Heart left ventricle (tissue), 16 donors: ENCODE measurements at regions of chr5 and their contacts with region 1.

Region 1: GRCh38 chr5:94161801-94162200 is 420.4 kb upstream of the POU5F2 start:
- DNase-seq: no peak
- ATAC-seq: no peak
- H3K4me3 ChIP-seq: no peak overlapping the region
- H3K27ac ChIP-seq: no peak overlapping the region
- H3K4me1 ChIP-seq: no peaks in the 10 kb centered on the region
- H3K27me3 ChIP-seq: no peaks in the 10 kb centered on the region
- CTCF ChIP-seq: no peak
- POLR2A ChIP-seq: no peak

Region 2: GRCh38 chr5:94345257-94345656 is 183.5 kb after region 1 on chr5:
- intact Hi-C with region 1: no loop called
- DNase-seq: no peak
- ATAC-seq: no peak
- H3K4me3 ChIP-seq: no peak overlapping the region
- H3K27ac ChIP-seq: no peak overlapping the region
- H3K4me1 ChIP-seq: no peaks in the 10 kb centered on the region
- H3K27me3 ChIP-seq: no peaks in the 10 kb centered on the region
- CTCF ChIP-seq: no peak
- POLR2A ChIP-seq: no peak

Region 3: GRCh38 chr5:94508461-94509148 is 346.8 kb after region 1 on chr5:
- intact Hi-C with region 1: loop called in 1 of 10 experiments (anchors 10 kb)
- DNase-seq: no peak
- ATAC-seq: no peak
- H3K4me3 ChIP-seq: no peak overlapping the region
- H3K27ac ChIP-seq: no peak overlapping the region
- H3K4me1 ChIP-seq: no peaks in the 10 kb centered on the region
- H3K27me3 ChIP-seq: no peaks in the 10 kb centered on the region
- CTCF ChIP-seq: no peak
- POLR2A ChIP-seq: no peak

Region 4: GRCh38 chr5:94540856-94541494 is 379.2 kb after region 1 on chr5:
- intact Hi-C with region 1: no loop called
- DNase-seq: no peak
- ATAC-seq: no peak
- H3K4me3 ChIP-seq: no peak overlapping the region
- H3K27ac ChIP-seq: no peak overlapping the region
- H3K4me1 ChIP-seq: peaks cover 0 to 24% (median 0%) of the 10 kb centered on the region in 12 donors
- H3K27me3 ChIP-seq: no peaks in the 10 kb centered on the region
- CTCF ChIP-seq: no peak
- POLR2A ChIP-seq: no peak